ENCODE measurements at regions of chr2 and their contacts with region 1.

Region 1: DNA sequence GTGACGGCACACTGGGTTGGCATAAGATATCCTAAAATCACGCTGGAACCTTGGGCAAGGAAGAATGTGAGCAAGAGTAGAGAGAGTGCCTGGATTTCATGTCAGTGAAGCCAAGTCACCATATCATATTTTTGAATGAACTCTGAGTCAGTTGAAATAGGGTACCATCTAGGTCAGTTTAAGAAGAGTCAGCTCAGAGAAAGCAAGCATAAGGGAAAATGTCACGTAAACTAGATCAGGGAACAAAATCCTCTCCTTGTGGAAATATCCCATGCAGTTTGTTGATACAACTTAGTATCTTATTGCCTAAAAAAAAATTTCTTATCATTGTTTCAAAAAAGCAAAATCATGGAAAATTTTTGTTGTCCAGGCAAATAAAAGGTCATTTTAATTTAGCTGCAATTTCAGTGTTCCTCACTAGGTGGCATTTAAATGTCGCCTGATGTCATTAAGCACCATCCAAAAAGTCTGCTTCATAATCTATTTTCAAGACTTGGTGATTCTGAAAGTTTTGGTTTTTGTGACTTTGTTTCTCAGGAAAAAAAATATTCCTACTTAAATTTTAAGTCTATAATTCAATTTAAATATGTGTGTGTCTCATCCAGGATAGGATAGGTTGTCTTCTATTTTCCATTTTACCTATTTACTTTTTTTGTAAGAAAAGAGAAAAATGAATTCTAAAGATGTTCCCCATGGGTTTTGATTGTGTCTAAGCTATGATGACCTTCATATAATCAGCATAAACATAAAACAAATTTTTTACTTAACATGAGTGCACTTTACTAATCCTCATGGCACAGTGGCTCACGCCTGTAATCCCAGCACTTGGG is 19.6 kb downstream of the RSAD2 start:
- DNase-seq: peak; percentile 41
- ATAC-seq: peak; percentile 56
- H3K4me3 ChIP-seq: no peak overlapping the region
- H3K27ac ChIP-seq: no peak overlapping the region
- H3K4me1 ChIP-seq: no peaks in the 10 kb centered on the region
- H3K27me3 ChIP-seq: no peaks in the 10 kb centered on the region
- CTCF ChIP-seq: peak; percentile 73
- EP300 ChIP-seq: no peak
- POLR2A ChIP-seq: no peak
- RAD21 ChIP-seq: peak; percentile 68

Region 2: DNA sequence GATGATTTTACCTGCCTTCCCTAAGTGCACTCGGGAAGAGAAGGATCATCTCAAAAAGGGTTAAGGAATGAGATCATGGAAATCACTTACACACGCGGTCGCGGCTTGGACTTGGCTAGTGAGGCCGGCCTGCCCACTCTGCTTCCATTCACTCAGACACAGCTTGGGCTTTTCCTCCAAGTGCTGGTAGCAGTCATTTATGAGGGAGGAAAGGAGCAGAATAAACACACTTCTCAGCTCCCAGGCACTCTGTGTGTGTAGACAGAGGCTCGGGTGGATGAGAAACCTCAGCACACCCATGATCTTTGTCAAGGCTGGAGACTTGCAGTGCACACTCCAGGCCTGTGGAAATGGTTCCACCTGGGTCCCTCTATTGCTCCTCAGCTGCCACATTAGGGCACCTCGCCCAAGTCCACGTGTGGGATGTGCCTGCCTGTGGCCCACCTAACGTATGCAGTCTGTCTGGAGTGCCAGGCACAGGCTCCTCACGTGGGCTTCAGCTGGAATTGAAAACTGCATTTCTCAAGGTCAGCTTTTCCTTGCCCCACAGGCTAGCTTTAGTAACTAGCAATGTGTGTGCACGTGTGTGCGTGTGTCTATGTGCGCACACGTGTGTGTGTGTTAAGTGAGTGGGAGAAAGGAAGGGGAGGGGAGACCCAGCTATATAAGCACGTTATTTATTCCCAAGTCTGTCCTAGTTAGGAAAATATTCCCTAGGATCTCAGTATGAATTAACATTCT is 916.5 kb before region 1 on chr2:
- CTCF ChIA-PET with region 1: no interaction called
- POLR2A ChIA-PET with region 1: no interaction called
- in situ Hi-C with region 1: no loop called
- intact Hi-C with region 1: no loop called
- DNase-seq: no peak
- ATAC-seq: no peak; the same call in 2 of the 3 replicates
- H3K4me3 ChIP-seq: no peak overlapping the region
- H3K27ac ChIP-seq: no peak overlapping the region
- H3K4me1 ChIP-seq: no peaks in the 10 kb centered on the region
- H3K27me3 ChIP-seq: peaks cover 1 to 13% of the 10 kb centered on the region in 2 experiments; a peak in 2 of 5 replicates
- CTCF ChIP-seq: no peak
- EP300 ChIP-seq: no peak
- POLR2A ChIP-seq: no peak
- RAD21 ChIP-seq: no peak

Region 3: GRCh38 chr2:6855855-6856547 is 41.1 kb before region 1 on chr2:
- CTCF ChIA-PET with region 1: no interaction called
- POLR2A ChIA-PET with region 1: no interaction called
- in situ Hi-C with region 1: no loop called
- intact Hi-C with region 1: no loop called
- DNase-seq: peak; percentile 42
- ATAC-seq: peak; percentile 56; the same call in 2 of the 3 replicates
- H3K4me3 ChIP-seq: no peak overlapping the region
- H3K27ac ChIP-seq: no peak overlapping the region
- H3K4me1 ChIP-seq: no peaks in the 10 kb centered on the region
- H3K27me3 ChIP-seq: no peaks in the 10 kb centered on the region
- CTCF ChIP-seq: no peak
- EP300 ChIP-seq: no peak
- POLR2A ChIP-seq: no peak
- RAD21 ChIP-seq: no peak

Region 4: DNA sequence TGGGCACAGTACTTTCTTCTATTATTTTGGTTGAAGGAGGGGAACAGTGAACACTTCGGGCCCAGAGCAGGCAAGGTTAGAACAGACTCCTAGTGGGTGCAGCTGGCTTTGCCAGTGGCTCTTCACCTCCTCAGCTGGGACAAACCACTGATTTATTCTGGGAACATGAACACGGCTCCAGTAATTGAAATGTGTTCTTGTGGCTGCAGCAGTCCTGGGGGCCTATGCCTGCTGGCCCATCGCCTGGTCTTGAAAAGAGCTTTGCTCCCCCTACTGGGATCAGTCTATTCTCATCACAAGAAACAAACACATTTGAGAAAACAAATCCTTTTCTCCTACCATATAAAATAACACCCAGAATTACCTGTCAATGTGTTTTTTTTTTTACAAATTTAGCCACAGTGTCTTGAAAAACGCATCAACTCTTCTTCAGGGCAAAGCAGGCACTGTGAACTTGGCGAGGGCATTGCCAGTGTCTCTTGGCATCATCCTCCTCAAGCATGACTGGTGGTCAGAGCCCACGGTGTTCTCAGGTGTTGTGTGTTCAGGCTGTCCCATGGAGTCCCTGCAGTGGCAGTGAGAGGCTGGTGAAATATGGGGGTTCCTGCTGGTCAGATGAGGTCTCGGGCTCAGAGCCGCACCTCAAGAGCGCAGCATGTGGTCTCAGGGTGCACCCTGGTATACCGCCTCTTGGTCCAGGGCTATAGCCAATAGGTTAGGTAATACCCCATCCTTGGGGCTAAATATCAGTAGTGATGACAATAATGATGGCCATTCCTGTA is 71.4 kb after region 1 on chr2:
- CTCF ChIA-PET with region 1: interaction called, 12 read pairs
- POLR2A ChIA-PET with region 1: no interaction called
- in situ Hi-C with region 1: no loop called
- intact Hi-C with region 1: loop called (anchors 1 kb)
- DNase-seq: peak; percentile 21
- ATAC-seq: peak; percentile 80
- H3K4me3 ChIP-seq: no peak overlapping the region
- H3K27ac ChIP-seq: no peak overlapping the region
- H3K4me1 ChIP-seq: no peaks in the 10 kb centered on the region
- H3K27me3 ChIP-seq: no peaks in the 10 kb centered on the region
- CTCF ChIP-seq: peak; percentile 26; the same call in 1 of the 2 replicates
- EP300 ChIP-seq: no peak
- POLR2A ChIP-seq: no peak
- RAD21 ChIP-seq: no peak

Region 5: GRCh38 chr2:7031547-7032245 is 134.6 kb after region 1 on chr2:
- CTCF ChIA-PET with region 1: interaction called, 5 read pairs
- POLR2A ChIA-PET with region 1: no interaction called
- in situ Hi-C with region 1: no loop called
- intact Hi-C with region 1: loop called (anchors 2 kb)
- DNase-seq: peak; percentile 98
- ATAC-seq: peak; percentile 82
- H3K4me3 ChIP-seq: no peak overlapping the region
- H3K27ac ChIP-seq: no peak overlapping the region
- H3K4me1 ChIP-seq: peaks cover 37% of the 10 kb centered on the region
- H3K27me3 ChIP-seq: no peaks in the 10 kb centered on the region
- CTCF ChIP-seq: peak; percentile 81
- EP300 ChIP-seq: peak; percentile 86 to 92; a peak in 3 of 4 replicates
- POLR2A ChIP-seq: no peak
- RAD21 ChIP-seq: no peak

Region 6: DNA sequence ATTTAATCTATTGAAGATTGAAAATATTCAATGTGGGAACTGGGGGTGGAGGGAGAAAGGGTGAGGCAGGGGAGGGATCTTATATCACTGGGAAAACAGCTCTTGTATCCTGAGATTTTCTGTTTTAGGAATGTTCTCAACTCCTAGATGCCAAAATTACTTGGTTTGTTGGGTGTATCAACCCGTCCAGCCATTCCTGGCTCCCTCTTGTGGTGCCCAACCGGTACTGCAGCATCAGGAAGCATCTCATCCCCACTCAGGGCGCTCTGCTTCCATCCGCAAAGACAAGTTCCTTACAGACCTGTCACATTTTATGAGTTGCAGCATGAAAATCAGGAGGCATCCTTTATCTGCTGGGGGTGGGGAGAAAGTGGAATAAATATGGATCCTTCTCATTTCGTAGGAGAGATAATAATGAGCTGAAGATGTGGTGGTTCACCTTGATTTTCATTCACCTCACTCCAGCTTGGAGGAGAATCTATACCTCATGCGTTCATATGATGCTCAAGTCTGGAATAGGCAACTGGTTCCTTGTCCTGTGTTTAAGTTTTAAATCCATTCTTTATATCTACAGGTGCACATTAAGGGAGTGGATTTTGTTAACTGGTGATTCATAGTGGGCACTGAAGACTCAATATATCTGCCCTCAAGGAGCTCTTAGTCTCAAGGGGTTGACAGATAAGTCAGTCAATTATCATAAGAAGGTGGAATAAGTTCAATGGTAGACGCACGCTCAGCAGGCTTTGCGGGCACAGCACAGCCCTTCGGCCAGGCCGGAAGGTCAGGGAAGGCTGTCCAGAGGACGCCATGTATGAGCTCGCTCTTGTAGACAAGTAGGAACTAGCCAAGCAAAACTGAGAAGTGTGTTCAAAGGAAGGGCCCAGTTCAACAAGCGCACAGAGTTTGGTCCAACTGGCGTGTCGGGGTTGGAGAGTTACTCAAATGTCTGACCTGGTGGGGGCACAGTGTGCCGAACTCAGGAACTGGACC is 147.4 kb after region 1 on chr2:
- CTCF ChIA-PET with region 1: interaction called, 31 read pairs
- POLR2A ChIA-PET with region 1: no interaction called
- in situ Hi-C with region 1: no loop called
- intact Hi-C with region 1: loop called (anchors 1 kb)
- DNase-seq: peak; percentile 48
- ATAC-seq: peak; percentile 91
- H3K4me3 ChIP-seq: no peak overlapping the region
- H3K27ac ChIP-seq: no peak overlapping the region
- H3K4me1 ChIP-seq: no peaks in the 10 kb centered on the region
- H3K27me3 ChIP-seq: no peaks in the 10 kb centered on the region
- CTCF ChIP-seq: peak; percentile 90
- EP300 ChIP-seq: no peak
- POLR2A ChIP-seq: no peak
- RAD21 ChIP-seq: peak; percentile 68

Region 7: GRCh38 chr2:7083577-7084509 is 186.7 kb after region 1 on chr2:
- CTCF ChIA-PET with region 1: interaction called, 12 read pairs
- POLR2A ChIA-PET with region 1: no interaction called
- in situ Hi-C with region 1: no loop called
- intact Hi-C with region 1: loop called (anchors 1 kb)
- DNase-seq: peak; percentile 45
- ATAC-seq: peak; percentile 98
- H3K4me3 ChIP-seq: no peak overlapping the region
- H3K27ac ChIP-seq: no peak overlapping the region
- H3K4me1 ChIP-seq: 0 out of 2 replicates have a peak, but pooled peaks cover 5% of the 10 kb centered on the region
- H3K27me3 ChIP-seq: no peaks in the 10 kb centered on the region
- CTCF ChIP-seq: peak; percentile 91
- EP300 ChIP-seq: no peak
- POLR2A ChIP-seq: no peak
- RAD21 ChIP-seq: peak; percentile 73

Measured in HepG2 (cell line).